T-cell (primary cell): ENCODE measurements at regions of chr18 and their contacts with region 1.

Region 1: GRCh38 chr18:3593904-3594661 is 144.1 kb downstream of the TGIF1 start:
- DNase-seq: peak; percentile 76 to 95 (median 88)
- ATAC-seq: peak; percentile 85 to 89 (median 86)
- H3K4me3 ChIP-seq: peak overlapping the region; percentile 58 to 63
- H3K4me3 Mint-ChIP-seq: peak overlapping the region; percentile 87 to 95 (median 91)
- H3K27ac ChIP-seq: peak overlapping the region; percentile 98
- H3K27ac Mint-ChIP-seq: peak overlapping the region; percentile 98 to 99
- H3K4me1 ChIP-seq: peaks cover 27 to 59% of the 10 kb centered on the region in 2 experiments
- H3K4me1 Mint-ChIP-seq: peaks cover 45 to 66% (median 56%) of the 10 kb centered on the region in 3 donors
- H3K27me3 ChIP-seq: no peaks in the 10 kb centered on the region
- H3K27me3 Mint-ChIP-seq: no peaks in the 10 kb centered on the region

Region 2: GRCh38 chr18:3360211-3360610 is 233.9 kb before region 1 on chr18:
- CTCF ChIA-PET with region 1: interaction called in 1 of 2 experiments, 10 read pairs
- POLR2A ChIA-PET with region 1: no interaction called
- DNase-seq: no peak
- ATAC-seq: no peak
- H3K4me3 ChIP-seq: no peak overlapping the region
- H3K4me3 Mint-ChIP-seq: no peak overlapping the region
- H3K27ac ChIP-seq: no peak overlapping the region
- H3K27ac Mint-ChIP-seq: no peak overlapping the region
- H3K4me1 ChIP-seq: no peaks in the 10 kb centered on the region
- H3K4me1 Mint-ChIP-seq: peaks cover 11 to 12% (median 12%) of the 10 kb centered on the region in 3 donors
- H3K27me3 ChIP-seq: peaks cover 0 to 2% of the 10 kb centered on the region in 2 experiments
- H3K27me3 Mint-ChIP-seq: peaks cover 4 to 6% of the 10 kb centered on the region in 2 donors

Region 3: DNA sequence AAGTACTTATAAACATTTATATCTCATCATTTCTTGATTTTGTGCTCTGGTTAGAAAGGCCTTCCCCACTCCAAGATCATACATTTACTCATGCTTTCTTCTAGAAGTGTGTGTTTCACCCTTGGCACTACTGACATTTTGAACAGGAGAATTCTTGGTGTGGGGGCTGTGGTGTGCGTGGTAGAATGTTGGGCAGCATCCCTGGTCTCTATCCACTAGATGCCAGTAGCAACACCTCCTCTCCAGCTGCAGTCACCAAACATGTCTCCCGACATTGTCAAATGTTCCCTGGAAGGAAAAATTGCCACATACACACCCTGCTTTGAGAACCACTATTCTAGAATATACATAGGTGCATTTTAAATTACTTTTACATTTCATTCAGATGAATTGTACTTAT is 152.8 kb before region 1 on chr18:
- CTCF ChIA-PET with region 1: interaction called, 3 to 17 read pairs
- POLR2A ChIA-PET with region 1: no interaction called
- DNase-seq: peak in 5 of 35 experiments; percentile 4 to 56 (median 14)
- ATAC-seq: peak in 3 of 4 experiments; percentile 52 to 82 (median 58)
- H3K4me3 ChIP-seq: no peak overlapping the region
- H3K4me3 Mint-ChIP-seq: no peak overlapping the region
- H3K27ac ChIP-seq: no peak overlapping the region
- H3K27ac Mint-ChIP-seq: no peak overlapping the region
- H3K4me1 ChIP-seq: no peaks in the 10 kb centered on the region
- H3K4me1 Mint-ChIP-seq: peaks cover 0 to 6% (median 4%) of the 10 kb centered on the region in 3 donors
- H3K27me3 ChIP-seq: no peaks in the 10 kb centered on the region
- H3K27me3 Mint-ChIP-seq: no peaks in the 10 kb centered on the region

Region 4: DNA sequence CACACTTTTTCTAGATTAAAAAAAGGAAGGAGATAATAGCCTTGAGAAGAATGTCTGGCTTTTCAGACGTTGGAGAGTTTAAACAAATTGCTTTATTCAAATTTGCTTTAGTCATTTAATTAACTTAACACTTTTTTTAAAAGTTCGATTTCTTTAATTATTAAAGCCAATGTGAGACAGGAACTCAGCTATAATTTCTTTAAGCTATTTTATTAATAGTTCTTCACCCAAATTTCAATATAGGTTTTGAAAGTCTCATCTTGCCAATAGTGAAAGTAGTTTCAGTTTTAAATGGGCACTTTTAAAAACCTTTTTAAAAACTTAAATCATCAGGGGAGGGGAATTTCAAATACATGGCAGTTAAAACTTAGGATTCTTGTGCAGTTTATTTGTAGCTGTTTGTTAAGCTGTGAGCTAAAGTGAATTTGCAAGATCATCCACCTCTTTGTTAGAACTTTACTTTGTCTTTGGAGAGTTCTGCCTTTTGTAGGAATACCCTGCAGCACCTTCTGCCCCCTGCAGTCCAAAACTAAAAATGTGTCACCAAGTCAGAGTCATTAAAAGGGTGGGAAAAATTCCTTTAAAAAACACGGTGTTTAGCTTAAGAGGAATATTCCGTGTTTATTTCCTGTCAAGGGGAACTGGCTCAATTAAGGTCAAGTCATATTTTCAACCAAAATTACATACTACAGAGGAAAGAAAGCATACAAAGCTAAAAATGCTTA is 139.6 kb before region 1 on chr18:
- CTCF ChIA-PET with region 1: interaction called, 5 to 36 read pairs
- POLR2A ChIA-PET with region 1: interaction called, 3 to 28 read pairs
- DNase-seq: peak in 21 of 35 experiments; percentile 16 to 74 (median 35)
- ATAC-seq: no peak
- H3K4me3 ChIP-seq: peak overlapping the region; percentile 35 to 50
- H3K4me3 Mint-ChIP-seq: peak overlapping the region; percentile 91 to 95 (median 94)
- H3K27ac ChIP-seq: peak overlapping the region; percentile 85
- H3K27ac Mint-ChIP-seq: peak overlapping the region; percentile 98
- H3K4me1 ChIP-seq: peaks cover 9 to 60% of the 10 kb centered on the region in 2 experiments
- H3K4me1 Mint-ChIP-seq: peaks cover 52 to 69% (median 69%) of the 10 kb centered on the region in 3 donors
- H3K27me3 ChIP-seq: no peaks in the 10 kb centered on the region
- H3K27me3 Mint-ChIP-seq: no peaks in the 10 kb centered on the region

Region 5: GRCh38 chr18:3665780-3666525 is 71.9 kb after region 1 on chr18:
- CTCF ChIA-PET with region 1: interaction called, 3 to 12 read pairs
- POLR2A ChIA-PET with region 1: interaction called in 1 of 2 experiments, 4 read pairs
- DNase-seq: peak; percentile 29 to 86 (median 64)
- ATAC-seq: peak; percentile 77 to 89 (median 84)
- H3K4me3 ChIP-seq: peak overlapping the region in 1 of 2 donors; percentile 0
- H3K4me3 Mint-ChIP-seq: peak overlapping the region in 2 of 3 donors; percentile 34 to 40
- H3K27ac ChIP-seq: no peak overlapping the region
- H3K27ac Mint-ChIP-seq: no peak overlapping the region
- H3K4me1 ChIP-seq: peaks cover 3 to 6% of the 10 kb centered on the region in 2 experiments
- H3K4me1 Mint-ChIP-seq: peaks cover 4 to 7% (median 6%) of the 10 kb centered on the region in 3 donors
- H3K27me3 ChIP-seq: peaks cover 0 to 3% of the 10 kb centered on the region in 2 experiments
- H3K27me3 Mint-ChIP-seq: no peaks in the 10 kb centered on the region